IMR-90 (cell line): ENCODE measurements at regions of chr1 and their contacts with region 1.

Region 1: DNA sequence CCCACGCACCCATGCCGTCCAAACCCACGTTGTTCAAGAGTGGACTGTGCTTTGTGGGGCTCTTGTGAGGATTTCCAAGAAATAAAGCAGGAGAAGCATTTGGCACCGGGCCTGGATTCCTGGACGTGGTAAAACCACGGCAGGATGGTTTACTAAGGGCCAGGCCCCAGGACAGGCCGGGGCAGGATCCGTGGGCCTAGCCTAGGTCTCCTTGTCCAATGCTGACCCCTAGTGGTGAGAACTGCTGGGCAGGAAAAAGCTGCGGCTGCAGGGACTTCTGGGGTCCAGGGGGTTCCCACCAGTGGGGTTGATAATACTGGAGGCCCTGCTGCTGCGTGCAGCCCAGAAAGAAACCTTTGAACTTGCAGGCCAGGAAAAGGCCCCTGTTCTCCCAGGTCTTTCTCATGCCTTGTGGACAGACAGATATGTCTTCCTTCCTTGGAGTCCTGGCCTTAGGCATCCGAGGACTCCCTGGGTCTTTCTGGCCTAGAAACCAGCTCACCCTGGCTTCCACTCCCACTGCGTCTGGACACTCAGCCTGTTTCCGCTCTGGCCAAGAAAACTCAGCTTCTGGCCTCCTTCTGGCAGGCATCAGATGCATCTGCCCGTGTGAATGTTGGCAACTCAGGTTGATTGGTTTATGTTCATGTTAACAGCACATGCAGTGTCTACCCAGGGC is 106.9 kb upstream of the TMEM51 start:
- DNase-seq: peak; percentile 81
- ATAC-seq: peak; percentile 97
- H3K4me3 ChIP-seq: no peak overlapping the region
- H3K27ac ChIP-seq: peak overlapping the region; percentile 62; the same call in 1 of the 2 replicates
- H3K4me1 ChIP-seq: peaks cover 2% of the 10 kb centered on the region; the same call in 1 of the 2 replicates
- H3K27me3 ChIP-seq: no peaks in the 10 kb centered on the region
- CTCF ChIP-seq: peak; percentile 95
- POLR2A ChIP-seq: peak; percentile 44; the same call in 1 of the 2 replicates
- RAD21 ChIP-seq: peak; percentile 98

Region 2: GRCh38 chr1:13960375-13960987 is 1086.1 kb before region 1 on chr1:
- CTCF ChIA-PET with region 1: no interaction called
- POLR2A ChIA-PET with region 1: no interaction called
- dilution Hi-C with region 1: no loop called
- in situ Hi-C with region 1: loop called (anchors 10 kb)
- intact Hi-C with region 1: loop called (anchors 2 kb)
- DNase-seq: peak; percentile 41
- ATAC-seq: peak; percentile 92
- H3K4me3 ChIP-seq: no peak overlapping the region
- H3K27ac ChIP-seq: no peak overlapping the region
- H3K4me1 ChIP-seq: no peaks in the 10 kb centered on the region
- H3K27me3 ChIP-seq: no peaks in the 10 kb centered on the region
- CTCF ChIP-seq: peak; percentile 90
- POLR2A ChIP-seq: no peak
- RAD21 ChIP-seq: peak; percentile 94

Region 3: GRCh38 chr1:14094611-14095400 is 951.8 kb before region 1 on chr1:
- CTCF ChIA-PET with region 1: no interaction called
- POLR2A ChIA-PET with region 1: no interaction called
- dilution Hi-C with region 1: no loop called
- in situ Hi-C with region 1: no loop called
- intact Hi-C with region 1: loop called (anchors 1 kb)
- DNase-seq: no peak
- ATAC-seq: peak; percentile 46
- H3K4me3 ChIP-seq: no peak overlapping the region
- H3K27ac ChIP-seq: no peak overlapping the region
- H3K4me1 ChIP-seq: no peaks in the 10 kb centered on the region
- H3K27me3 ChIP-seq: no peaks in the 10 kb centered on the region
- CTCF ChIP-seq: no peak
- POLR2A ChIP-seq: no peak
- RAD21 ChIP-seq: no peak

Region 4: GRCh38 chr1:14516974-14517840 is 529.4 kb before region 1 on chr1:
- CTCF ChIA-PET with region 1: no interaction called
- POLR2A ChIA-PET with region 1: no interaction called
- dilution Hi-C with region 1: no loop called
- in situ Hi-C with region 1: no loop called
- intact Hi-C with region 1: loop called (anchors 10 kb)
- DNase-seq: peak; percentile 92
- ATAC-seq: peak; percentile 79
- H3K4me3 ChIP-seq: no peak overlapping the region
- H3K27ac ChIP-seq: peak overlapping the region; percentile 88
- H3K4me1 ChIP-seq: peaks cover 20% of the 10 kb centered on the region
- H3K27me3 ChIP-seq: no peaks in the 10 kb centered on the region
- CTCF ChIP-seq: no peak
- POLR2A ChIP-seq: no peak
- RAD21 ChIP-seq: no peak

Region 5: GRCh38 chr1:14733048-14733778 is 313.4 kb before region 1 on chr1:
- CTCF ChIA-PET with region 1: interaction called, 4 read pairs
- POLR2A ChIA-PET with region 1: no interaction called
- dilution Hi-C with region 1: no loop called
- in situ Hi-C with region 1: no loop called
- intact Hi-C with region 1: loop called (anchors 5 kb)
- DNase-seq: no peak
- ATAC-seq: no peak
- H3K4me3 ChIP-seq: no peak overlapping the region
- H3K27ac ChIP-seq: no peak overlapping the region
- H3K4me1 ChIP-seq: peaks cover 5% of the 10 kb centered on the region; the same call in 1 of the 2 replicates
- H3K27me3 ChIP-seq: no peaks in the 10 kb centered on the region; the same call in 1 of the 2 replicates
- CTCF ChIP-seq: no peak
- POLR2A ChIP-seq: no peak
- RAD21 ChIP-seq: no peak

Region 6: DNA sequence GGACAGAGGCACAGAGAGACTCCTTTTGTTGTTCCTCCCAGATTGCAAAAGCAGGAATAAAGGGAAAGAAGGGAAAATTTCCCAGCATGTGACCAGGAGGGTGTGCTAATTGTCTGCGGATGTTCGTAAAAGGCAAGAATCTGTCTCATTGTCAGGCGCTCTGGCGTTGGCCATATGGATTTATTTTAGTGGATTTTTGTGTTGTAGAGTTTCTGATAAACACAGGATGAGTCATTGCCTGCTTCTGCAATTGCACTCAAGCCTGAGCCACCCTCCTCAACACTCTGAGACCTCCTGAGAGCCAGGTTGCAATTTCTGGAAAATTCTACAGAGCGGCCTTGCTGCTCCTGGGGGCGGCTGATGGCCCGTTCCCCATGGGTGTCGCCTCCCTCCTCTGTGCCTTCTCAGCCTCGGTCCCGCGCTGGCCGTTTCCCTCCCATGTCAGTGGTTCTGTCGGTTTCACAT is 220.4 kb before region 1 on chr1:
- CTCF ChIA-PET with region 1: no interaction called
- POLR2A ChIA-PET with region 1: no interaction called
- dilution Hi-C with region 1: no loop called
- in situ Hi-C with region 1: no loop called
- intact Hi-C with region 1: loop called (anchors 1 kb)
- DNase-seq: peak; percentile 89
- ATAC-seq: peak; percentile 96
- H3K4me3 ChIP-seq: no peak overlapping the region
- H3K27ac ChIP-seq: peak overlapping the region; percentile 79; the same call in 1 of the 2 replicates
- H3K4me1 ChIP-seq: peaks cover 12% of the 10 kb centered on the region; the same call in 1 of the 2 replicates
- H3K27me3 ChIP-seq: peaks cover 4% of the 10 kb centered on the region; the same call in 1 of the 2 replicates
- CTCF ChIP-seq: peak; percentile 46
- POLR2A ChIP-seq: no peak
- RAD21 ChIP-seq: peak; percentile 53